Breast epithelium (tissue), 4 donors: ENCODE measurements at regions of chr17 and their contacts with region 1.

Region 1: GRCh38 chr17:16282522-16282921 is 65.5 kb downstream of the PIGL start:
- DNase-seq: no peak
- H3K4me3 ChIP-seq: no peak overlapping the region
- H3K27ac ChIP-seq: no peak overlapping the region
- H3K4me1 ChIP-seq: peaks cover 0 to 7% of the 10 kb centered on the region in 2 donors
- H3K27me3 ChIP-seq: no peaks in the 10 kb centered on the region
- CTCF ChIP-seq: no peak
- POLR2A ChIP-seq: no peak

Region 2: GRCh38 chr17:16215273-16215964 is 67.1 kb before region 1 on chr17 and contains the start of gene NCOR1:
- intact Hi-C with region 1: loop called (anchors 2 kb)
- DNase-seq: peak; percentile 84 to 90
- H3K4me3 ChIP-seq: peak within 1 kb of the TSS; percentile 91 to 99 (median 98)
- H3K27ac ChIP-seq: peak within 1 kb of the TSS; percentile 96 to 98
- H3K4me1 ChIP-seq: peaks cover 0 to 8% of the 10 kb centered on the region in 2 donors
- H3K27me3 ChIP-seq: no peaks in the 10 kb centered on the region
- CTCF ChIP-seq: peak in 1 of 3 donors; percentile 32
- POLR2A ChIP-seq: peak; percentile 83
- total RNA-seq, gene NCOR1: 118 to 229 (median 174) TPM